ENCODE measurements at regions of chr5 and their contacts with region 1.

Region 1: DNA sequence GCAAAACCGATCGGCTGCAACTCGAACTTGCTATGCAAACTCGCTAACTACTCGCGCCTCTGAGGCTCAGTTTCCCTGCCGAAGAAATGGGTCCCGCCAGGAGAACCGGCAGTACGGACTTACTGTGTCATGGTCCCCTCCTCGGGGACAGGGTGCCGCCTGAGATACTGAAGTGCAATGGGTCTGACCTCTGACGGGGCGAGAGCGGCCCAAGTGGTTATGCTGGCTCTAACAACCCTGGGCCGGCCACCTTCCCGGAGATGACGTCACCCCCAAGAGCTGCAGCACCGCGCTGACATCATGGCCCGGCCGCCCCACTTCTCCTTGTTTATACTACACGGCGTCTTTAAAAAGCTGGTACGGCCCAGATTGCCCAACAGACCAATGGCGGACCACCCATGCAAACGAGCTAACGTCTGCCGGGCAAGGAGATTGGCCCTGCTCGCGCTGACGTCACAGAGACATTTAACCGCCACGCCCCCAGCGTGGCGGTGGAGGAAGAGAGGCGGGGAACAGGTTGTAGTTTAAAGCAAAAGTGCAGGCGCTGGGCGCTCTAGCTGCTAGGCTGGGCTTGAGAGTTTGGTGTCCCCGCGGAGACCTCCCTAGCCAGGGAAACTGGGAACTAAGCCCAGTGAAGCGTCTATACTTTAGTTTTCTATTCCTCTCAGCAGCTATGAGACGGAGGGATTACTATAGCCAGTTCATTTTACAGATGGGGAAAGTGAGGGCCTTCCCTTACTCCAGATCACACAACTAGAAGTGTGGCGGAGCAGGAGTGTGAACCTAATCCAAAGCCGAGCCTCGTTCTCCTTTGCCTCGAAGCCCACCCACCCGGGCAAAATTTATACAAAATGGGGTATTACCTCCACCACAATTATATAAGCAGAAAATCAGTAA is 654 bp upstream of the RNF44 start:
- DNase-seq: peak; percentile 94 to 100 (median 98)
- H3K4me3 ChIP-seq: peak overlapping the region; percentile 85 to 100
- H3K4me3 Mint-ChIP-seq: peak overlapping the region; percentile 97 to 100 (median 98)
- H3K27ac ChIP-seq: peak overlapping the region; percentile 98
- H3K27ac Mint-ChIP-seq: peak overlapping the region; percentile 99 to 100 (median 100)
- H3K4me1 ChIP-seq: peaks cover 70% of the 10 kb centered on the region
- H3K4me1 Mint-ChIP-seq: peaks cover 55 to 86% (median 66%) of the 10 kb centered on the region in 4 donors
- H3K27me3 ChIP-seq: no peaks in the 10 kb centered on the region
- H3K27me3 Mint-ChIP-seq: no peaks in the 10 kb centered on the region

Region 2: DNA sequence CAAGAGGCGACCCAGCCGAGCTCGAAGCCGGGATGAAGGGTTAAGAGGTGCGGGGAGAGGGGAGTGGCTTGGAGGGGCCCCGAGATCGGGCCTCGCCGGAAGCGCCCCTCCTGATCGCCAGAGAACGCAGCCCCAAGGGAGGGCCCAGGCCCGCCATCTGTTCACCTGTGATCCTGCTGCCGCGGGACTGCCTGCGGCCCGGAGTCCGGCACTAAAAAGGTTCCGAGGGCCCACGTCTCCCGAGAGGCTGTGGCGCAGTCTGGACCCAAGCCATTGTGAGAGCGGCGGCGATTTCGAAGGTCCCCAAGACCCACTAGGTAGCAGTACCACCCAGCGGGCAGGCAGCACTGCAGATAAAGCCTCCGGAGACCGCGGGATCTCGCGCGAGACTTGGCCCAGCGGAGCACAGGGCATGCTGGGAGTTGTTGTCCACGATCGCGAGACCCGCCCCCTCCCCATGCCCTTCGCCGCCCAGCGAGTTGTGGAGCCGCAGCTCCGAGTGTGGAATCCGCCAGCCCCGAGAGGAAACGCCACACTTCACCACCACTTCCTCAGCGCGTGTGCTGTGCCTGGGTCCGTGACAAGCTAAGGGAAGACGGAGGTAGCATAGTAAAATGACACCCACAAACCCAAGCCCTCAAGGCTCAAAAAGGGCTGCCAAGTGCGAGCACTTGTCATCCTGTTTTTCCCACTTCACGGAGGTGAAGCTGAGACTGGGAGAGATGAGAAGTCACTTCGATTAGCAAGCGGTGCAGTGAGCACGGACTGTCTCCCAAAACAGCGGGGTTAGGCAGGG is 176.2 kb before region 1 on chr5 and contains the start of gene KIAA1191:
- CTCF ChIA-PET with region 1: interaction called, 3 read pairs
- POLR2A ChIA-PET with region 1: interaction called, 25 read pairs
- intact Hi-C with region 1: loop called (anchors 1 kb)
- DNase-seq: peak; percentile 93 to 97 (median 94)
- H3K4me3 ChIP-seq: peak within 1 kb of the TSS; percentile 91 to 97
- H3K4me3 Mint-ChIP-seq: peak within 1 kb of the TSS; percentile 97 to 99 (median 98)
- H3K27ac ChIP-seq: peak within 1 kb of the TSS; percentile 78
- H3K27ac Mint-ChIP-seq: peak within 1 kb of the TSS; percentile 92 to 98 (median 97)
- H3K4me1 ChIP-seq: peaks cover 39% of the 10 kb centered on the region
- H3K4me1 Mint-ChIP-seq: peaks cover 27 to 57% (median 42%) of the 10 kb centered on the region in 4 donors
- H3K27me3 ChIP-seq: no peaks in the 10 kb centered on the region
- H3K27me3 Mint-ChIP-seq: no peaks in the 10 kb centered on the region
- total RNA-seq, gene KIAA1191: 73.3 to 76.6 TPM

Region 3: GRCh38 chr5:176447982-176448608 is 89.8 kb before region 1 on chr5 and contains the start of gene FAF2:
- CTCF ChIA-PET with region 1: interaction called, 25 read pairs
- POLR2A ChIA-PET with region 1: interaction called, 98 read pairs
- intact Hi-C with region 1: loop called (anchors 1 kb)
- DNase-seq: peak; percentile 97 to 100 (median 99)
- H3K4me3 ChIP-seq: peak within 1 kb of the TSS; percentile 95 to 100
- H3K4me3 Mint-ChIP-seq: peak within 1 kb of the TSS; percentile 97 to 100 (median 98)
- H3K27ac ChIP-seq: peak within 1 kb of the TSS; percentile 98
- H3K27ac Mint-ChIP-seq: peak within 1 kb of the TSS; percentile 98 to 100 (median 99)
- H3K4me1 ChIP-seq: peaks cover 42% of the 10 kb centered on the region
- H3K4me1 Mint-ChIP-seq: peaks cover 21 to 51% (median 36%) of the 10 kb centered on the region in 4 donors
- H3K27me3 ChIP-seq: no peaks in the 10 kb centered on the region
- H3K27me3 Mint-ChIP-seq: peaks cover 0 to 2% of the 10 kb centered on the region in 2 donors
- total RNA-seq, gene FAF2: 32.3 to 33.6 TPM

Region 4: DNA sequence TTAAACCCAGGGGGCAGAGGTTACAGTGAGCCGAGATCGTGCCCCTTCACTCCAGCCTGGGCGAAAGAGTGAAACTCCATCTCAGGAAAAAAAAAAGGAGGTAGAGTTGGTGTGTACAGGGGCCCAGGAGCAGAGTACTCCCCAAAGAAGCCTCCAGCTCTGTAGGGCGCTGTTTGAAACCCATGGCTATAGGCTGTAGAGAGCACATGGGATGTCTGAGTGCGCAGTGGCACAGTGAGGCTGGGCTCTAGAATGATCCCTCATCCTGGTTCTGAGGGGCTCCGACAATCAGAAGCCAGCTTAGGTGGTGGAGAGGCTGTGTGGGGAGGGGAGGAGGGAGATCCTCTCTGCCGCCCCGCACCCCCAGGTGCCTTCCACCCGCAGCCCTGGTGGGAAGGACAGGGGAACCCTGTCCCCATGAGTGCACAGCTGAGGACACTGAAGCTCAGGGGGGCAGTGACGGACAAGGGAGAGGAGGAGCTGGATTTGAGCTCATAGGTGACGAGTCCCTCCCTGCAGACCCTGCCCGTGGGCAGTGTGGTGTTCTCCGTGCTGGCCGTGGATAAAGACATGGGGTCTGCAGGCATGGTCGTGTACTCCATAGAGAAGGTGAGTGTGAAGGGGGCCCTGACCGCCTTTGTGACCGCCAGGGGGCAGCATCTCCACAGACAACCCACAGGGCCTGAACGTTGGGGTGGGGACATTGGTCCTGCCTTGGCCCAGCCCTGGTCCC is 35.9 kb after region 1 on chr5:
- CTCF ChIA-PET with region 1: interaction called, 27 read pairs
- POLR2A ChIA-PET with region 1: interaction called, 23 read pairs
- intact Hi-C with region 1: loop called (anchors 2 kb)
- DNase-seq: peak; percentile 62 to 71 (median 67)
- H3K4me3 ChIP-seq: no peak overlapping the region
- H3K4me3 Mint-ChIP-seq: no peak overlapping the region
- H3K27ac ChIP-seq: no peak overlapping the region
- H3K27ac Mint-ChIP-seq: no peak overlapping the region
- H3K4me1 ChIP-seq: peaks cover 6% of the 10 kb centered on the region
- H3K4me1 Mint-ChIP-seq: peaks cover 4 to 16% (median 8%) of the 10 kb centered on the region in 4 donors
- H3K27me3 ChIP-seq: no peaks in the 10 kb centered on the region
- H3K27me3 Mint-ChIP-seq: peaks cover 3 to 9% of the 10 kb centered on the region in 2 donors

Region 5: DNA sequence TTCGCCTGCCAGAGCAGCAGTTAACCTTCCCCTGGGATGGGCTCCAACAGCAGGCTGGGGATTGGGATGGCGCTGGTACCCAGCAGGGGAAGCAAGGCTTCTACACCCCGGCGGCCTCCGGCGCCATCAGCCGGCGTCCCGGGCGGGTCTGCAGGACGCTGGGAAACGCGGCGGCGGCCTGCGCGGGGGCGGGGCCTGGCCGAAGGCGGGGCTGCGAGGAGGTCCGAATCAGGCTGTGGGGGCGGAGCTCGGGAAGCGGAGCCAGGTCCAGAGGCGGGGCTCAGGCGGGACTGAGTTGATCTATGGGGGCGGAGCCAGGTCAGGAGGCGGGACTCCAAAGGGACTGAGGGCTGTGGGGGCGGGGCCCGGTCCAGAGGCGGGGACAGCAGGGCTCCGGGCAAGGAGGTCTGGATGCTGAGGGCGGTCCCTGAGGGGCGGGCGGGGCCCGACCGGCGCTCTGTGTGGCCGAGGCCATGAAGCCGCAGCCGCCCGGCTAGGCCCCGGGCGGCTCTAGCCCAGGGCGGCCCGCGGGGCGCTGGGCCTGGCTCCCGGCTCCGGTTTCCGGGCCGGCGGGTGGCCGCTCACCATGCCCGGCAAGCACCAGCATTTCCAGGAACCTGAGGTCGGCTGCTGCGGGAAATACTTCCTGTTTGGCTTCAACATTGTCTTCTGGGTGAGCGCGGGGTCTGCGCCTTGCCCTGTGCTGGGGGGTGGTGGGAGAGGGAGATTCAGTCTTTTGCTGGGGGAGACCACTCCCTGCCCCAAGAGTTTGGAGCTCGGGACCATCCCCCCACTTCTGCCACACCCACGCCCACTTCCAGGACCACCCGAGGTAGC is 109.4 kb after region 1 on chr5 and contains the start of gene TSPAN17:
- CTCF ChIA-PET with region 1: interaction called, 4 read pairs
- POLR2A ChIA-PET with region 1: interaction called, 14 read pairs
- intact Hi-C with region 1: loop called (anchors 1 kb)
- DNase-seq: peak; percentile 94 to 97 (median 95)
- H3K4me3 ChIP-seq: peak within 1 kb of the TSS; percentile 73 to 76
- H3K4me3 Mint-ChIP-seq: peak within 1 kb of the TSS; percentile 85 to 94 (median 90)
- H3K27ac ChIP-seq: peak within 1 kb of the TSS; percentile 62
- H3K27ac Mint-ChIP-seq: peak within 1 kb of the TSS; percentile 80 to 95 (median 93)
- H3K4me1 ChIP-seq: peaks cover 50% of the 10 kb centered on the region
- H3K4me1 Mint-ChIP-seq: peaks cover 31 to 69% (median 43%) of the 10 kb centered on the region in 4 donors
- H3K27me3 ChIP-seq: no peaks in the 10 kb centered on the region
- H3K27me3 Mint-ChIP-seq: no peaks in the 10 kb centered on the region
- total RNA-seq, gene TSPAN17: 27.4 to 30.7 TPM